ENCODE measurements at regions of chr17 and their contacts with region 1.

Region 1: DNA sequence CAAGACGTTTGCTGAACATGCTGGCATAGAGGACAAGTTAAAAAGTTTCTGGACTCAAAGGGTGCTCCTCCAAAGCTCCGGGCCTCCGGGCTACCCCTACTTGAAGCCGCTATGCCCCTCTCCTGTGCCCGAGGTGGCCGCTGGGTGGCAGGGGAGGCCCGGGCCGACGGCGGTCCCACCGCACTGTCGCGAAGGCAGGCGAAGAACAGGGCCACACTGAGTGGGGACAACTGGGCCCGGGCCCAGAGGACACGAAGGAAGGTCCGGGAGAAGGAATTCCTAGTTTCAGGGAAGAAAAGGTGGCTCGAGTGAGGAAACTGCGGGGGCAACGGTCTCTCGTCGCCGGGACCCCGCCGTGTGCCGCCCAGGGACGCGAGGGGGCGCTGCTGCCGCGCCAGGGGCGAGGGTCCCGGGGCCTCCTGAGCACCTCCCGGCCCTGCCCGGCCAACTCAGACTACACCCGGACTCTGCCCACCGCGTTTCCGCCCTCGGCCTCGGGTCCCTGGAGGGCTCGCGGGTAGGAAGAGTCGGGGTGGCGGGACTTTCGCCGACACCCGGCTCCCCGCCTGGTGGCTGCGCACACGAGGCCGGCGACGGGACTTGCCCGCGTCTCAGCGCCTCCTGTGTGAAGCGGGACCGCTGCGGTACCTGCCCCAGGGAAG is 885 bp upstream of the CHCT1 start:
- DNase-seq: peak; percentile 79
- ATAC-seq: peak; percentile 93
- H3K4me3 Mint-ChIP-seq: peak overlapping the region; percentile 85
- H3K27ac Mint-ChIP-seq: peak overlapping the region; percentile 74
- H3K4me1 Mint-ChIP-seq: peaks cover 8% of the 10 kb centered on the region
- H3K27me3 Mint-ChIP-seq: no peaks in the 10 kb centered on the region
- CTCF ChIP-seq: peak; percentile 100

Region 2: GRCh38 chr17:60455378-60455777 is 34.0 kb after region 1 on chr17:
- CTCF ChIA-PET with region 1: no interaction called
- POLR2A ChIA-PET with region 1: no interaction called
- intact Hi-C with region 1: no loop called
- DNase-seq: no peak
- ATAC-seq: no peak
- H3K4me3 Mint-ChIP-seq: no peak overlapping the region
- H3K27ac Mint-ChIP-seq: no peak overlapping the region
- H3K4me1 Mint-ChIP-seq: no peaks in the 10 kb centered on the region
- H3K27me3 Mint-ChIP-seq: no peaks in the 10 kb centered on the region
- CTCF ChIP-seq: no peak

Region 3: DNA sequence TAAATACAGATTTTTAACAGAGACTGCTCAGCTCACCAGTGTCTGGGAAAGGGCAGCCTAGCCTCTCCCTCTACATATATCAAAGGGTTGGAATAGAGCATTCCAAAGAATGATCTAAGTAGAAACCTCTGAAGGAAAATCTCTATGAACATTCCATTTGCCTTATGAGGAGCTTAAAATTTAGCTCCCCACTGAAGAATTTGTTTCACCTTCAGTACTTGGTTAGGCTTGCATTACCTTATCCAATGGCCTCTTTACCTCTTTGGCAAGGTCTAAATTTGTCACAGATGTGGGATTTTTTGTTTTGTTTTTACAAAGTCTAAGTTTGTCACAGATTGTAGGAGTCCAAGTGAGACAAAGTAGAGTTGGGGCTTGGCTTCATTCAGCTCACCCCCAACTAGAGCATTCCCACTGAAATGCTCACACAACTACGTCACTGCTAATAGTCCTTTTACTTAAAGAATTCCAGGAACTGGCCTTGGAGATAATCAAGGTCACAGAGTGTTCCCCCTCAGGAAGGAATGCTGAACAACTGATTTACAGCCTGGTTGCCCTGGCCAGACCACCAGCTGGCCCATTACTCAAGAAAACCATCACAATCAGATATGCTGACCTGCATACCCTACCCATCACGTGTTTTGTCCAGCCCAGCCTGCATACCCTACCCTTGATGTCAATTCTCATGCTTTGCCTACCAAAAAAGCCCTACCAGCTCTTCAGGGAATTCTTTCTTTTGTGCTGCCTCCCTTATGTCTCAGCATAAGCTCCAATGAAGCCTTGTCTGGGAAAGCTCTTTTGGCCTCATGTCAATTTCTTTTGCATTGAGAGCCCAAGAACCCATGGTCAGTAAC is 152.0 kb after region 1 on chr17:
- CTCF ChIA-PET with region 1: no interaction called
- POLR2A ChIA-PET with region 1: no interaction called
- intact Hi-C with region 1: loop called (anchors 1 kb)
- DNase-seq: no peak
- ATAC-seq: no peak
- H3K4me3 Mint-ChIP-seq: no peak overlapping the region
- H3K27ac Mint-ChIP-seq: no peak overlapping the region
- H3K4me1 Mint-ChIP-seq: peaks cover 6% of the 10 kb centered on the region
- H3K27me3 Mint-ChIP-seq: peaks cover 2% of the 10 kb centered on the region
- CTCF ChIP-seq: no peak